Brain microvascular endothelial cell (primary cell): ENCODE measurements at regions of chr9 and their contacts with region 1.

Region 1: DNA sequence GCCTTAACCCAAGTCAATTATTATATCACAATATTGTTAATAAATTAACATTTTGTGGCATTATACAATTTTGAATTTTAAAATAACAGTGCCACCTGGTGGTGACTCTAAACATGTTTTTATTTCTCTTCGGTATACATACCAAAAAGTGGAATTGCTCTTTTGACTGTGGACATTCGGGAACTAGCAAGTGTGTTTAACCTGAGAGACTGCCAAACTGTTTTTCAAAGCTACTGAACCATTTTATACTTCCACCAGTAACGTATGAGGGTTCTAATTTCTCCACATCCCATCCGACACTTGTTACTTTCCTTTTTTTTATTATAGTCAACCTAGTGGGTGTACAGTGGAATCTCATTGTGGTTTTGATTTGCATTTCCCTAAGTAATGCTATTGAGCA is 18.3 kb upstream of the HSDL2 start:
- DNase-seq: no peak
- H3K4me3 ChIP-seq: no peak overlapping the region
- H3K27ac ChIP-seq: no peak overlapping the region
- H3K27me3 ChIP-seq: no peaks in the 10 kb centered on the region
- CTCF ChIP-seq: no peak

Region 2: GRCh38 chr9:112112941-112113681 is 248.5 kb before region 1 on chr9:
- in situ Hi-C with region 1: loop called (anchors 25 kb)
- DNase-seq: peak; percentile 64
- H3K4me3 ChIP-seq: no peak overlapping the region
- H3K27ac ChIP-seq: peak overlapping the region; percentile 78
- H3K27me3 ChIP-seq: no peaks in the 10 kb centered on the region
- CTCF ChIP-seq: peak; percentile 57

Region 3: DNA sequence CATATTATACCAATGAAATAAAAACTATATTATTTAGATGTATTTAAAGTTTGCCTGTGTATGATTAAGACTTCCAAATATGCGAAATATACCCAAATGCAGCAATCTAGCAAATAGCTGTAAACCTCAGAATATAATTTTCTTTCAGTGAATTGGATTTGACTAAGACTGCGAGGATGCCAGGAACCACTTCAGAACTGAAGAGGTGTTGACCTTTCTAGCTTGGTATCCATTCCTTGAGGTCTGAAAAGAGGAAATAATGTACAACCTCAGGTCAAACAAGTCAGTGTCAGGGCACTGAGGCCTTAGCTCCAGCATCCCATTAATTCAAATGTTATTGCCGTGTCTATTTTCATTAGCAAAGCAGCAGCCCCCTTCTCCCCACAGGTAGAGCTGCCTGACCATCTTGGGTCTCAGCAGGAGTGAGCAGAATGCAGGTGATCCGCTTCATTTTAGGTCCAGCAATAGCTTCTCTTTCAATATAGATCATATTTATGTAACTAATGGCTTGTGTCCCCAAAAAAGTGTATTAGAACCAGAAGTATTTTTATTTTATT is 225.1 kb after region 1 on chr9:
- in situ Hi-C with region 1: no loop called
- DNase-seq: no peak
- H3K4me3 ChIP-seq: no peak overlapping the region
- H3K27ac ChIP-seq: no peak overlapping the region
- H3K27me3 ChIP-seq: no peaks in the 10 kb centered on the region
- CTCF ChIP-seq: no peak